ENCODE measurements at regions of chr17 and their contacts with region 1.

Region 1: DNA sequence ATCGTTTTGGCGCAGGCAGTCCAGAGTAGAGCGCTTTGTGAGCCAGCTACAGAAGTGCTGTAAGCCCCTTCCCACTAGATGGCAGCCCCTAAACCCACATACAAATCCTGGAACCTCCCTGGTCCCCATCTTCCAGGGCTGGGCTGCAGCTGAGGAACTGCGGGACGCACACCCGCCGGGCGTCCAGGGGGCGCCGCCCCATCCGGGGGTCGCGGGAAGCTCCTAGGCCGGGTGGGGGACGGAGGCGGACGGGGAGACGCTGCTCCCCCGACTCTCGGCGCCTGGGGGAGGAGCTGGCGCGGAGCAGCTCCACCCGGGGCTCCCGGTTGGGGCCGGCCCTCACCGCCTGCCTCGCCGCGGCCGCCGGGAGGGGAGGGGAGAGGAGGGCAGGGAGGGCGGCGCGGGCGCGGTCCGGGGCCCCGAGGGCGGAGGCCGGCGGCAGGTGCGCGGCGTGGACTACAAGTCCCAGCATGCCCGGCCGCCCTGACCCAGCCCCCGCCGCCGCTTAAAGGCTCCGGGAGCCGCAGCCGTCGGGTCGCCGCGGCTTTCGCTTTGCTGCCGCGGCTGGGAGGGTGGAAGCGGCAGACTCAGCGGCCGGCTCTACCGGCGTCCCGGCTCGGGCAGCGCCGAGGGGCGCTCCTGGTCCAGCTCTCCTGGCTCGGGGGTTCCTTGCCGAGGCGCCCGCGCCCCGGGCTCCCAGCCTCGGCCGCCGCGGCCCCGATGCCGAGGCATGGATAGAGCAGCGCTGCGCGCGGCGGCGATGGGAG is at the start of gene KSR1:
- DNase-seq: peak; percentile 67 to 84 (median 77)
- H3K4me3 ChIP-seq: peak within 1 kb of the TSS; percentile 57 to 96 (median 88)
- H3K27ac ChIP-seq: peak within 1 kb of the TSS; percentile 44 to 96 (median 87)
- H3K27me3 ChIP-seq: no peaks in the 10 kb centered on the region
- CTCF ChIP-seq: peak in 55 of 56 donors; percentile 31 to 82 (median 67)
- total RNA-seq, gene KSR1: 44.7 to 102 (median 69.9) TPM

Region 2: GRCh38 chr17:27245230-27245696 is 210.8 kb before region 1 on chr17:
- intact Hi-C with region 1: loop called in 1 of 2 experiments (anchors 2 kb)
- DNase-seq: peak; percentile 18 to 89 (median 82)
- H3K4me3 ChIP-seq: peak overlapping the region in 21 of 59 donors; percentile 1 to 30 (median 14)
- H3K27ac ChIP-seq: peak overlapping the region; percentile 2 to 92 (median 84)
- H3K27me3 ChIP-seq: no peaks in the 10 kb centered on the region
- CTCF ChIP-seq: peak; percentile 41 to 94 (median 78)

Region 3: DNA sequence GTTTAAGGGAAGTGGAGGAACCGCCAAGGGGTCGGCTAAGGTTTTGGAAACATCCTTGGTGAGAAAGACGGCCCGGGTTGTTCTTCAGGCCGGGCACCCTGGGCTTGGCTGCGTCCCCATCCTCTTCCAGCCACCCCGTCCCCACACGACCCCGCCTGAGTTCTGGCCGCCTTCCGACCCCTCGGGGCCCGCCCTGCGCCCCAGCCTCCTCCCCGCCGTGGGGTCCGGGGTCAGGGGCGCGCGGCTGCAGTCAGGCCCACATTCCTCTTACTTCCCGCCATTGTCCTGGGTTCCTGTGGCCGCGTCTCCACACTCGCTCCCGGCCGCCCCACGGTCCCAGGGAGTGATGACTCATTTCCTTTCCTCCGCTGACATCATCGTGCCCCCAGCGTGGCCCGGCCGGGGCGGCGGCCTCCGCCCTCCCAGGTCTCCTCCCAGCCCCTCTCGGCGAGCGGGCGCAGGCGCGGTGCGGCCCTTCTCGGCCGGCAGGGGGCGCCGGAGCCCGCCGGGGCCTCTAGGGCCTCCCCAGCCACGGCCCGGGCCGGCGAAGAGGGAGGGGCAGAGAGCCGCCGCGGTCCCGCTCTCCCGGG is 102.5 kb before region 1 on chr17:
- intact Hi-C with region 1: loop called (anchors 5 to 10 kb)
- DNase-seq: peak; percentile 62 to 90 (median 78)
- H3K4me3 ChIP-seq: peak overlapping the region; percentile 51 to 89 (median 73)
- H3K27ac ChIP-seq: peak overlapping the region; percentile 37 to 98 (median 91)
- H3K27me3 ChIP-seq: no peaks in the 10 kb centered on the region
- CTCF ChIP-seq: peak; percentile 38 to 99 (median 87)

Region 4: GRCh38 chr17:27407916-27408846 is 47.9 kb before region 1 on chr17:
- intact Hi-C with region 1: no loop called
- DNase-seq: peak in 2 of 10 donors; percentile 12 to 19
- H3K4me3 ChIP-seq: no peak overlapping the region
- H3K27ac ChIP-seq: no peak overlapping the region
- H3K27me3 ChIP-seq: no peaks in the 10 kb centered on the region
- CTCF ChIP-seq: no peak

Region 5: DNA sequence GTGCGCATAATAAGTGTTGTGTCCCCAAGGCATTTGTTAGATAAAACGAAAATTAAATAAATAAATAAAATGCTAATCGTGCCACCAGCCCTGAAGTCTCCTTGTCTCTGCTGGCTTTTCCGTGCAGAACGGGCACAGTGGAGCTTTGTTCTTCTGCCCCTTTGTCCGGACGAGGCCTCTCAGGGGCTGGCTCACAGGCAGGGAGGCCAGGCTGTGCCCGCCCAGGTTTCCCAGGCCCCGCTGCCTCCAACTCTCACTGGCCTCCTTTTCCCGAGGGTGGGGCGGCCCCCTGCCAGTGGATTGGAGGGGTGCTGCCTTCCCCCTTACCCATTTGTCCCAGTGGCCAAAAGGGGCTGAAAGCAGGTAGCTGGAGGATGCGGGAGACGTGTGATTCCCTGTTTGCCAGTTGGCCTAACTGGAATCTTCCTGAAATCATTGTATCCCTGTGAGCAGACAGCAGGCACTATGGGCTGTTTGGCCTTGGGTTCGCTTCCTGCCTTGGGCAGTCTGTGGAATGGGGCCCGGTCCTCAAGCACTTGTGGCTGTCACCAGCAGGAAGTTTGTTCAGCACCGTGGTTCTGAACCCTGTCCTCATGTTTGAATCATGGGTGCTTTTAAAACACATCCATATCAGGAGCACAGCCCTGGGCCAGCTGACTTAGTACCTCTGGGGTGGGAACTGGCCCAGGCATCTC is 64.5 kb after region 1 on chr17:
- intact Hi-C with region 1: loop called in 1 of 2 experiments (anchors 5 kb)
- DNase-seq: peak in 8 of 10 donors; percentile 54 to 81 (median 76)
- H3K4me3 ChIP-seq: peak overlapping the region in 5 of 59 donors; percentile 1 to 34 (median 21)
- H3K27ac ChIP-seq: peak overlapping the region in 56 of 59 donors; percentile 10 to 90 (median 76)
- H3K27me3 ChIP-seq: no peaks in the 10 kb centered on the region
- CTCF ChIP-seq: peak in 5 of 56 donors; percentile 10 to 46 (median 17)

Region 6: DNA sequence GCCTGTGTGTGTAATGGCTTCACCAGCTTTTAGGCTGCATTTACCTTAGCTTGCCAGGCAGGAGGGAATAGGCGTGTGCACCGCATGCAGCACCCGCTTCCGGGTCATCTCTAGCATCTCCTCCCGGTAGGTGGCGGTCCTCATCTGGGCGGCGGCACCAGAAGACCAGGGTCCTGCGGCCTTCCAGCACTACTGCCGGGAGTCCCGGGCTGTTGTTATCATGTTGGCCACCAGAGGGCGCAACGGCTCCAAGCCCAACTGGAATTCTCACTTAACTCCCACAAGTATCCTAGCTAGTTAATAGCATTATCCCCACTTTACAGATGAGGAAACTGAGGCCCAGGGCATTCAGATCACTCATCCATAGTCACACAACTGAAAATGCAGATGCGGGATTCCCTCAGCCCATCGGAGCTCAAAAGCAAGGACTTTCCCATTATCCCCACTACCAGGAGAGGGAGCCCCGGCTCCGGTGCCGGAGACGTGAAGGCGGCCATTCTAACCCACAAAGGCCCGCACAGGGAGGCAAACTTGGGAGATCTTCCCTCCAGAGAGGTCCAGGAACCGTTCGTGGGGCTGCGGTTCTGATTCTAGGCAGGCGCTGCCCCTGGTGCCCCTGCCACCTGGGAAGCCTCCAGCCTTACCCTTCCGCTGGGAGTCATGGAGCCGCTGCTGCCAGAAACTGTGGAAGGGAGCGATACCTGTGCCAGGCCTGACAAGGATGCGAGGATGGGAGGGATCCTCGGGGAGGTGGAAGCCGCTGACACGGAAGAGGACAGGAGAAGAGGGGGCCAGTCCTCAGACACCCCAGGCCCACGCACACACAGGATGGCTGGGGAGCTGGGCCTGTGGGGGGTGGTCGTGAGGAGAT is 198.8 kb after region 1 on chr17:
- intact Hi-C with region 1: loop called in 1 of 2 experiments (anchors 5 kb)
- DNase-seq: peak; percentile 60 to 82 (median 68)
- H3K4me3 ChIP-seq: no peak overlapping the region
- H3K27ac ChIP-seq: no peak overlapping the region
- H3K27me3 ChIP-seq: no peaks in the 10 kb centered on the region
- CTCF ChIP-seq: peak; percentile 76 to 98 (median 94)